Activated CD8-positive, alpha-beta T cell treated with anti-CD3 and anti-CD28 coated beads, Interleukin-2, amount 10 ng/mL, durations not matched to agents 7 days and 5 days (primary cell): ENCODE measurements at regions of chr9 and their contacts with region 1.

Region 1: DNA sequence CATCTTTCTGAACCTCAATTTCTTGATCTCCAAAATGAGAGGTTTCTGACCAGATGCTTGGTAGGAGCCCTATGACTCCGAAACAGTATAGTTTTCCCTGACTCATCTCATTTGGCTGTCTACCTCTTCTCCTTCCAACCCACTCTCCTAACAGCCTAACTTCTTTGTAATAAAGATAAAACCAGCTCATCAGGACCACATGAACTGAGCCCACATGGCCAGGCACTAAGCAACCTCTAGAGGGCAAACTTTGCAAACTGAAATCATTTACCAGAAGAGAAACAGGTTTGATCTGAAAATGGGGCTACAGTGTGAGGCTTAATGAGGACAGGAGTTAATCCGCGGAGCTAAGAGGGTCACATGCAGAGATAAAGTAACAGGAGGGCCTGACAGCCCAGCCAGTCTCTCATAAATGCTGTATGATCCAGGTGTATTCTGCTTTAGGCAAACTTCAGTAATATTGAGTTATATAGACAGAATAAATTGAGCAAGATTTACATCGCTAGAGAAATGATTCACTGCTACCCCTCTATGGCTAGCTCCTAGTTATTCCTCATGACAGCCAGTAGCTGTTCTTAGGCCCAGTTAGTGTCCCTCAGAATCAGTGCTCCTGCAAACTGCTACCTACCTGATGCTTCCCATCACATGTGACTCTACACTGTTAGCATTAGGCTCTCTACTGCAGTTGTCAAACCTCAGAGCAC is 64.6 kb downstream of the ABCA1 start:
- DNase-seq: peak; percentile 58
- ATAC-seq: peak; percentile 92
- H3K4me3 Mint-ChIP-seq: no peak overlapping the region
- H3K27ac Mint-ChIP-seq: no peak overlapping the region
- H3K4me1 Mint-ChIP-seq: no peaks in the 10 kb centered on the region
- H3K27me3 Mint-ChIP-seq: no peaks in the 10 kb centered on the region

Region 2: DNA sequence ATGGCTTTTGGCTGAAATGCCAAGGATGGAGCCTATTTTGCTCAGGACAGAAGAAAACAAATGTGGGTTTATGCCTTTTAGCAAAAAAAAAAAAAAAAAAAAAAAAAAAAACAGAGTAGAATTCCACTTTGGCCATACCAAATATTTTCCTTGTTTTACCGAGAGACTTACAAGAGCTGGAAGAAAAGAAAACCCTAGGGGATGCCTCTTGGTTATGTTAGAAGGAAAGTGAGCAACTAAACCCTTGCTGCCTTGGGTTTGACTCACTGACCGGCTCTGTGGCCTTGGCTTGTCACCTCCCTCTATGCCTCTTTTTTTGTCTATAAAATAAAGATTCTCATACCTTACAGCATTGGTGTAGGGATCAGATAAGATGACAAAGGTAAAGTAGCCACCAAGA is 134.2 kb after region 1 on chr9:
- CTCF ChIA-PET with region 1: interaction called, 10 read pairs
- POLR2A ChIA-PET with region 1: no interaction called
- DNase-seq: no peak
- ATAC-seq: no peak
- H3K4me3 Mint-ChIP-seq: no peak overlapping the region
- H3K27ac Mint-ChIP-seq: no peak overlapping the region
- H3K4me1 Mint-ChIP-seq: peaks cover 11% of the 10 kb centered on the region
- H3K27me3 Mint-ChIP-seq: peaks cover 32% of the 10 kb centered on the region

Region 3: GRCh38 chr9:105157130-105157583 is 293.8 kb after region 1 on chr9:
- CTCF ChIA-PET with region 1: interaction called, 20 read pairs
- POLR2A ChIA-PET with region 1: no interaction called
- DNase-seq: peak; percentile 33
- ATAC-seq: peak; percentile 71
- H3K4me3 Mint-ChIP-seq: no peak overlapping the region
- H3K27ac Mint-ChIP-seq: no peak overlapping the region
- H3K4me1 Mint-ChIP-seq: peaks cover 4% of the 10 kb centered on the region
- H3K27me3 Mint-ChIP-seq: peaks cover 6% of the 10 kb centered on the region